AG04450 (cell line): ENCODE measurements at regions of chr14 and their contacts with region 1.

Region 1: DNA sequence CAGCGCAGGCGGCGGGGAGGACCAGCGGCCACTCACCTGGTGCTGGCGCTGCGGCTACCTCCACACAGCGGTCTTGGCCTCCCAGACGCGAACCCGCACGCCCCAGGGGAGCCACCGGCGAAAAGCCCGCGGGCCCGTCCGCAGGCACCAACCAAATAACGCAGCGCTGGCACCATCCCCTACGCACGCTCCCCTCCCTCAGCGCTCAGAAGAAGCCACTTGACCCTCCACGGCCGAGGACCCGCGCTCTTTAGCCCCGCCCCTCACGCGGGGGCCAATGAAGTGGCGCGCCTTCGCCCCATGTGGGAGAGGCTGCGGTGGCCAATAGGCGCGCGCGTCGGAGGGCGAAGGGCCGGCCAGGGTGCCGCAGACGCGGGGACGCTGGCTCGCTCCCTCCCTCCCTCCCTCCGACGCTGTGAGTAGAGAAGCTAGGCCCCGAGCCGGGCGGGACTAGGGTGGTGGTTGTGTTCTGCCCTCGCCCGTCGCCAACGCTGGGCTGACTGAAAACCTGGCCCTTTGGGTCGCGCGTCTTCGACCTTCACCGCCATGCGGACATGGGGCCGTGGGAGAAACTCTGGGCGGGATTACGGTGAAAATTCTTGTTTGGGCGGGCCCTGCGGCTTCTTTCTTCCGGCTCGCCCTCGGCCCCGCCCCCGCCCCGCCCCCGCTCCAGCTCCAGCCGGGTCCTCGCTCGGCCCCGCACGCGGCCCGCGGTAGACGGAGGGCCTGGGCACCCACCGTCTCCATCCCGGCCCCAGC is at the starts of genes DMAC2L and L2HGDH:
- DNase-seq: peak; percentile 62
- H3K4me3 ChIP-seq: peak within 1 kb of the TSS; percentile 88
- H3K27ac ChIP-seq: peak within 1 kb of the TSS; percentile 93
- H3K27me3 ChIP-seq: no peaks in the 10 kb centered on the region
- CTCF ChIP-seq: no peak
- polyA plus RNA-seq, gene DMAC2L: 8.1 and 12.6 TPM in 2 replicates
- polyA plus RNA-seq, gene L2HGDH: 2.8 and 3.6 TPM in 2 replicates

Region 2: DNA sequence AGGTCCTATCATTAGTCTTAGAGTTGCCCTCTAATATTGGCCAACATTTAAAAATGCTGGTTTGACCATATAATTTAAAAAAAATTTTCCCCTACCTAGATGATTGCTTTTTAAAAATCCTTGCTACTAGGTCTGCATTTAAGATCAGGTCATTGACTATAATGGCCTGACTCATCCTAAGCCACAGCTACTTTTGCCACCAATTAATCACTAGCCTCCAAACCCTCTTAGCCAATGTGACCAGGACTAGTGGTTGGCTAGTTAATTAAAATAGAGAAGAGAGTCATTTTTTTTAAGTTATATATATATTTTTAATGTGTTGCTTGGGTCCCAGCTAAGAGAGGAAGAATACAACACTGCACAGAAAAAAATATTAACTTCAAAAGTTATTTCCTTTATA is 138.3 kb before region 1 on chr14:
- CTCF ChIA-PET with region 1: no interaction called
- POLR2A ChIA-PET with region 1: no interaction called
- DNase-seq: no peak
- H3K4me3 ChIP-seq: no peak overlapping the region
- H3K27ac ChIP-seq: no peak overlapping the region
- H3K27me3 ChIP-seq: no peaks in the 10 kb centered on the region
- CTCF ChIP-seq: no peak

Region 3: DNA sequence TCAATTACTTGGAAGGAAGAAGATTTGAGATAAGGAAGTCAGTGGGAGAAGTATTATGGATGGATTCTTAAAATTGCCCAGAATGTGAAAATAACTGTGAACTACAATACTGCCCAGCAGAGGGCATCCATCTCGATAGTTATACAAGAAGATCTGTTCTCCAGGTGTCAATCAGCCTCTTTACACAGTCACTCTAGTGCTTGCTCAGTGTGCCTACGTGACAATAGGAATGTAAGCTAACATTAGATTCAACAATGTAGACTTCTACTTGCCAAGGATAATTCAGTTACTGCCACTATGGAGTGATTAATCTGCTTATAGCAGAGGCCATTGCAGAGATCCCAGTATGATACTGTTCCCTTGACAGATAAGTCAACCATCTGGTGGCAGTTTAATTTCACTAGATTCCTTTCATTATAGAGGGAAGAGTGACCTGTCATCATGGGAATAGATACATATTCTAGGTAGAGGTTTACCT is 230.8 kb after region 1 on chr14:
- CTCF ChIA-PET with region 1: interaction called, 10 read pairs
- POLR2A ChIA-PET with region 1: no interaction called
- DNase-seq: no peak
- H3K4me3 ChIP-seq: no peak overlapping the region
- H3K27ac ChIP-seq: no peak overlapping the region
- H3K27me3 ChIP-seq: peaks cover 2% of the 10 kb centered on the region
- CTCF ChIP-seq: peak; percentile 60

Region 4: GRCh38 chr14:50608302-50608851 is 296.2 kb after region 1 on chr14:
- CTCF ChIA-PET with region 1: no interaction called
- POLR2A ChIA-PET with region 1: no interaction called
- DNase-seq: no peak
- H3K4me3 ChIP-seq: no peak overlapping the region
- H3K27ac ChIP-seq: no peak overlapping the region
- H3K27me3 ChIP-seq: no peaks in the 10 kb centered on the region
- CTCF ChIP-seq: no peak